ENCODE measurements at regions of chr1 and their contacts with region 1.

Region 1: DNA sequence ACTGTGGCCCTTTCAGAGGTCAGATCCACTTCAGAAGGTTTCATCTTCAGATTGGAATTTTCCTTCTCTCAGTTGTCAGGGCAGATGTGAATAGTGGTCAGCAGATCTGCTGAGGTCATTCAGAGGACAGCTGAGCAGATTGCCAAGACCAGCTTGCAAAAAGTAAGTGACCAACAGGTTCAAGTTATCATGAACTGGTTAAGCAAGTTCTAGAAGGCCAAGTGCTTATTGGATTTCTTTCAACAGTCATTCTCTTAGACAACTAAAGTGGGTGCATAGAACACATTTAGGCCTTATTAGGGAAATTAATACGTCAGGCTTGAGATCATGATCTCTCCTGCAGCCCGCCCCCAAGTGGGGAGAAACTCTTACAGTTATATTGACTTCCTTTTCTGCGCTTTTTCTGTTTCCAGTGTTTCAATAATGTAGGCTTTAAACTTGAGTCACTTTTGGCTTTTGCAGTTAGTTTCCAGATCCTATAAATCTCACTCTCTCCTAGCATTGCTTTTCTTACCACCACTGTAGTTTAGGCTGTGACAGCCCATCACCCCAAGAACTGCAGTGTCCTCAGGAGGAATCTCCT is 96.4 kb downstream of the C1orf21 start:
- DNase-seq: peak; percentile 88
- H3K4me3 ChIP-seq: no peak overlapping the region
- H3K27ac ChIP-seq: peak overlapping the region; percentile 68 to 79 (median 78)
- H3K4me1 ChIP-seq: peaks cover 0 to 73% (median 67%) of the 10 kb centered on the region in 4 donors
- H3K27me3 ChIP-seq: no peaks in the 10 kb centered on the region
- CTCF ChIP-seq: peak in 1 of 4 experiments; percentile 11
- EP300 ChIP-seq: peak in 2 of 4 donors; percentile 19 to 54
- POLR2A ChIP-seq: no peak

Region 2: GRCh38 chr1:184615301-184615700 is 132.1 kb after region 1 on chr1:
- intact Hi-C with region 1: loop called (anchors 5 kb)
- DNase-seq: peak; percentile 68
- H3K4me3 ChIP-seq: no peak overlapping the region
- H3K27ac ChIP-seq: peak overlapping the region; percentile 29 to 56 (median 47)
- H3K4me1 ChIP-seq: peaks cover 0 to 51% (median 41%) of the 10 kb centered on the region in 4 donors
- H3K27me3 ChIP-seq: no peaks in the 10 kb centered on the region
- CTCF ChIP-seq: no peak
- EP300 ChIP-seq: no peak
- POLR2A ChIP-seq: no peak

Region 3: DNA sequence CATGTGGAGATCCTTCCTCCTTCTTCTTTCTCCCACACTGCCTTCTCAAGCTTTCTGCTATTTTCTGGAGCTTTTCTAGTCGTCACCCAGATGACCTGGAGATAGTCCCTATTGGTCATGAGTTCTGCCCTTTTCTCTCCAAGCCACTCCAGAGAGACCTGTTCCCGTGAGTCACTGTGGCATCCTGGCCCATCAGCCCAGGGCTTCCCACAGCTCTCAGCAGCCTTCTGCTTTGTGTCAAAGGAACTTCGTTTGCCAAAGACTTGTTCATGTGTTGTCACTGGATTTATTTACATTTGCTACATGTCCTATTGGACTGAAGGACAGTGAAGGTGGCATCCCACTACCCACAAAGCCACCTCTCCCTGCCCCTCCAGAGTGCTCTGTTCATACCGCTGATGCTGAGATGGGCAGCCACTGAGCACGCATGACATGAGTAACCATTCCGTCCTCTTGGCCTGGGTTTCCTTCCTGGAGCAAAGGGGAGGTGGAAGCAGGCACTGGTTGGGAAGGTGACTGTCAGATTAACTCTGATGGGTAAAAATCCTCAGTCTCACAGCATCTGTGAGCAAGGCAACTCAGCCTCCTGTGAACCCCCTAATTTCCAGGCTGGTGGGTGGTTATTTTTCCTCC is 152.3 kb after region 1 on chr1:
- intact Hi-C with region 1: no loop called
- DNase-seq: peak; percentile 74
- H3K4me3 ChIP-seq: no peak overlapping the region
- H3K27ac ChIP-seq: peak overlapping the region; percentile 35 to 56 (median 44)
- H3K4me1 ChIP-seq: peaks cover 0 to 46% (median 22%) of the 10 kb centered on the region in 4 donors
- H3K27me3 ChIP-seq: no peaks in the 10 kb centered on the region
- CTCF ChIP-seq: no peak
- EP300 ChIP-seq: peak in 1 of 4 donors; percentile 46
- POLR2A ChIP-seq: no peak

Region 4: DNA sequence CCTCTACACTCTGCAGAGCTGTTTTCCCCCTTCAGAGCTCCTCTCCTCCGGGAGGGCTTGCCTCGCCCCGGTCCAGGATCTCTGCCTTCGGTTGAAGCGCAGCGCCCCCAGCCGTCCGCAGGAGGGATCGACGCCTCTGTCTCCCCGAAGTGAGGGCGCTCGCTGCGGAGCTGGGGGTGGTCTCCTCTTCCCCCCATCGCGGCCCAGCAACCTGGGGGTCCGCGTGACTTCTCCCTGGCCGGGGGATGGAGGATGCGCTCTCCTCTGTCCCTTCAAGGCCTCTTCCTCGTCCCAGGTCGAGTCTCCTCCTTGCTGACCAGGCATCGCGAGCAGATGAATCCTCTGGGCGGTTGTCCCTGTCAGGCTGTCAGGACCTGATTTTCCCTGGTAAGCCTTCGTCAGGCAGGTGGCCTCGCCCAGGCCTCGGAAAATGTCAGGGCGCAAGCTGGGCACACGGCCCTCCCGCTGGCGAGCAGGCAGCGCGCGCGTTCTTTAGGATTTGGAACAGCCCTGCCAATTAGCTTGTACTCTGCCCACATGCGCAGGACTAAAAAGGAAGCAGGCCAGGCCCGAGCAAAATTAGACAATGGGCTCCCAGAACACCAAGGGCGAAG is 181.0 kb after region 1 on chr1:
- intact Hi-C with region 1: loop called (anchors 10 kb)
- DNase-seq: peak; percentile 92
- H3K4me3 ChIP-seq: peak overlapping the region in 3 of 4 donors; percentile 12 to 34 (median 29)
- H3K27ac ChIP-seq: peak overlapping the region in 1 of 4 donors; percentile 29
- H3K4me1 ChIP-seq: peaks cover 0 to 36% (median 13%) of the 10 kb centered on the region in 4 donors
- H3K27me3 ChIP-seq: no peaks in the 10 kb centered on the region
- CTCF ChIP-seq: peak; percentile 85 to 93 (median 92)
- EP300 ChIP-seq: no peak
- POLR2A ChIP-seq: no peak